Ascending aorta (tissue), 2 donors: ENCODE measurements at regions of chr3 and their contacts with region 1.

Region 1: DNA sequence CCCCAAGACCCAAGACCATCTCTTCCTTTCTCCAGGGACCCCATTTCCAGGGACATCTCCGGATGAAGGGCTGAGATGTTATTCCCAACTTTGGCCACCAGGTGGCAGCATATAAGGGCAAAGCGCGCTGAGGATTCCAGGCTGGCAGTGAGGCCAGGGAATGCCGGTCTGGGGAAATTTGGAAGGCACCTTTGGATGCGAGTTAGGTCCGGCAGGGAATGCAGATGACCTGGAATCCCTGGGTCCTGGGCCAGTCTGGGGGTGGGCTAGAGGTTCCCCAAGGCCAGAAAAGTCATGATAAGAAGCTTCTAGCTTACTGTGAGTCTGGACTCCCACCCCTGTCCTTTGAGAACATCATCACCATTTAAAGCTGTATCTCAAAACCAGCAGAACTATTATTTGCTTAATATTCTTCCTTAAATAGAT is 1.6 kb upstream of the CHST13 start:
- DNase-seq: no peak
- H3K4me3 ChIP-seq: no peak overlapping the region
- H3K27ac ChIP-seq: no peak overlapping the region
- H3K4me1 ChIP-seq: peaks cover 3 to 4% of the 10 kb centered on the region in 2 donors
- H3K27me3 ChIP-seq: peaks cover 10% of the 10 kb centered on the region
- CTCF ChIP-seq: peak; percentile 67 to 98 (median 89)

Region 2: DNA sequence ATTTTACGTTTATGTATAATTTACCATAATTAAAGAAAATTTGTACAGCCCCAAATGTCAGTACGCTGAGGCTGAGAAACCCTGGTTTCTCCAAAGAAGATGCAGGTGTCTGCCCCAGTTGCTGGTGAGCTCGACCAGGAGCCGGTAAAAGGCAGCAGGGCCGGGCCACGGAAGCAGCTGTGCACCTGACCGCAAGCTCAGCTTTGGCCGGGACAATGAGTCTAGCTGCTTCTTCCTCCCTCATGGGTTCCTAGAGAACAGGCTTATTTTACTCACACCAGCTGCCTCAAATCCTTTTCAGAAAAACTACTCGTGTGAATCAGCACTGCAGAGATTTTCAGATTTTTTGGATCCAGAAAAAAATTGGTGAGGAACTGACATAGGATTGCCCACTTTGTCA is 28.6 kb before region 1 on chr3:
- intact Hi-C with region 1: no loop called
- DNase-seq: no peak
- H3K4me3 ChIP-seq: no peak overlapping the region
- H3K27ac ChIP-seq: no peak overlapping the region
- H3K4me1 ChIP-seq: no peaks in the 10 kb centered on the region
- H3K27me3 ChIP-seq: no peaks in the 10 kb centered on the region
- CTCF ChIP-seq: no peak

Region 3: GRCh38 chr3:127455541-127456450 is 933.4 kb after region 1 on chr3:
- intact Hi-C with region 1: loop called (anchors 1 kb)
- DNase-seq: peak in 1 of 2 donors; percentile 79
- H3K4me3 ChIP-seq: peak overlapping the region; percentile 49 to 62
- H3K27ac ChIP-seq: no peak overlapping the region
- H3K4me1 ChIP-seq: peaks cover 0 to 18% of the 10 kb centered on the region in 2 donors
- H3K27me3 ChIP-seq: no peaks in the 10 kb centered on the region
- CTCF ChIP-seq: peak; percentile 84 to 95 (median 92)

Region 4: GRCh38 chr3:127544192-127544802 is 1021.9 kb after region 1 on chr3:
- intact Hi-C with region 1: loop called (anchors 2 kb)
- DNase-seq: peak in 1 of 2 donors; percentile 85
- H3K4me3 ChIP-seq: no peak overlapping the region
- H3K27ac ChIP-seq: no peak overlapping the region
- H3K4me1 ChIP-seq: peaks cover 0 to 19% of the 10 kb centered on the region in 2 donors
- H3K27me3 ChIP-seq: no peaks in the 10 kb centered on the region
- CTCF ChIP-seq: peak; percentile 55 to 85 (median 67)